Mammary epithelial cell (primary cell): ENCODE measurements at regions of chr1 and their contacts with region 1.

Region 1: DNA sequence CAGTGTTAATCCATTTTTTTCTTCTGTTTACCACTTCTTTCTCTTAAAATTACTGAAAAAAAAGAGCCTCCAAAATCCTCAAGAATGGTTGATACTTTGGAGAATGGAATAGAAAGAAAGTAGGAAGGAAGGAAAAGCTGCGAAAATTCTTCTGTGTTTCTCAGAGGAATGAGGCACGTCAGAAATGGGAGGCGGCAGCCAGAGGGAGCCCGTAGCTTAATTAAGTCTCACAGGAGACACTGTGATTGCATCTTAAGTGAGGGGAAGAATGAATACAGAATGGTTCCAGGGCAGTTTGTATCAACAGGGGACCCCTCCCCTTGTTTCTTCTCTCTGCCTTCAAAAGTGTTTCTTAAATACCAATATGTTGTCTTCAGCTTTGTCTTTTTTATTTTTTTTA is 1099.5 kb downstream of the PLA2G4A start:
- DNase-seq: peak; percentile 20
- H3K4me3 ChIP-seq: no peak overlapping the region
- H3K27ac ChIP-seq: no peak overlapping the region
- H3K4me1 ChIP-seq: no peaks in the 10 kb centered on the region
- H3K27me3 ChIP-seq: no peaks in the 10 kb centered on the region
- CTCF ChIP-seq: peak; percentile 50 to 70

Region 2: GRCh38 chr1:187051618-187052232 is 876.6 kb before region 1 on chr1:
- CTCF ChIA-PET with region 1: no interaction called
- dilution Hi-C with region 1: no loop called
- in situ Hi-C with region 1: no loop called
- intact Hi-C with region 1: loop called (anchors 10 kb)
- DNase-seq: peak; percentile 31
- H3K4me3 ChIP-seq: no peak overlapping the region
- H3K27ac ChIP-seq: no peak overlapping the region
- H3K4me1 ChIP-seq: no peaks in the 10 kb centered on the region
- H3K27me3 ChIP-seq: peaks cover 3% of the 10 kb centered on the region
- CTCF ChIP-seq: peak; percentile 22 to 55

Region 3: DNA sequence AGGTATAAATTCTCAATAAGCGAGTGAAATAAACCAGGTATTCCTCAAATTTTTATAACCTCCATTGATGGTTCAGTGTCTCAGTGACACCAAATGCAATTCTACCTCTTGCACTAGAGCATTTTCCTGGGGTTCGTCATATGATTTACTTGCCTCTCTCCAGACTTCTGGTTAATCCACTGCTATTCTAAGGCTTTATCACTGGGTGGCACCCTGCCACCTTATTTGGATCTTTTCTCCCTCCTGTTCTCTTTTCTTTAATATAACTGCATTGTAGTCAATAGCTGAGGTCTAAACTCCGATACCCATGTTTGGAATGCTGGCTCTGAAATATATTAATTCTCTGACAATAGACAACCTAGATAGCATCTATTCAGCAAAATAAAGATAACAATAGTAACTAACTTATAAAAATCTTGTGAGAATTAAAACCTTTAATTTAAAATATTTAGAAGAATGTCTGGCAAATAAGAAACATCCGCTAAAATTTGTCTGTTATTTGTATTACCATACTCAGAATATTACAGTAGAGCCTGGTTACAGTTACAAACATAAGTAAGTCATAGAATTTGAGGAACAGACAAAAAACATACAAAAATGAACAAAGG is 663.2 kb before region 1 on chr1:
- CTCF ChIA-PET with region 1: no interaction called
- dilution Hi-C with region 1: no loop called
- in situ Hi-C with region 1: no loop called
- intact Hi-C with region 1: loop called (anchors 2 kb)
- DNase-seq: peak; percentile 46
- H3K4me3 ChIP-seq: no peak overlapping the region
- H3K27ac ChIP-seq: no peak overlapping the region
- H3K4me1 ChIP-seq: peaks cover 6% of the 10 kb centered on the region
- H3K27me3 ChIP-seq: peaks cover 4% of the 10 kb centered on the region
- CTCF ChIP-seq: peak; percentile 66

Region 4: DNA sequence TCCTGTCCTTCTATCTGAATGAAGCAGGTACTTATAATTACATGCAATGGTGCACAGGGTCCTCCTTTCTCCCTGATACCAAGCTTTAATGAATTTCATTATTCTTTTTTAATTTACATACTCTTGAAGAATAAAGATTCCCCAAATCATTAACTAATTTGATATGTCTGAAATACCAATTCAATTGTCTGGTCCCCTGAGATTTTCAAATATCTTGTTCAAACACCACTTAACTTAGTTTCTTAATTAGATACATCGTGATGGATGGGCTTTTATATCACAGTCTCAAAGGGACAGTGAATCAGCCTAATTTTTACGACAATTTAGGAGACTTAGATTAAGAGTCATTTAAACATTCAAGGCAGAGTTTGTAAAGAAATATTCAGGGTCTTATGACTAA is 44.9 kb before region 1 on chr1:
- CTCF ChIA-PET with region 1: no interaction called
- dilution Hi-C with region 1: no loop called
- in situ Hi-C with region 1: no loop called
- intact Hi-C with region 1: no loop called
- DNase-seq: no peak
- H3K4me3 ChIP-seq: no peak overlapping the region
- H3K27ac ChIP-seq: no peak overlapping the region
- H3K4me1 ChIP-seq: no peaks in the 10 kb centered on the region
- H3K27me3 ChIP-seq: peaks cover 3% of the 10 kb centered on the region
- CTCF ChIP-seq: no peak

Region 5: GRCh38 chr1:187909382-187909781 is 18.9 kb before region 1 on chr1:
- CTCF ChIA-PET with region 1: no interaction called
- dilution Hi-C with region 1: no loop called
- in situ Hi-C with region 1: no loop called
- intact Hi-C with region 1: no loop called
- DNase-seq: no peak
- H3K4me3 ChIP-seq: no peak overlapping the region
- H3K27ac ChIP-seq: no peak overlapping the region
- H3K4me1 ChIP-seq: no peaks in the 10 kb centered on the region
- H3K27me3 ChIP-seq: no peaks in the 10 kb centered on the region
- CTCF ChIP-seq: no peak

Region 6: GRCh38 chr1:187977298-187977697 is 49.0 kb after region 1 on chr1:
- CTCF ChIA-PET with region 1: no interaction called
- dilution Hi-C with region 1: no loop called
- in situ Hi-C with region 1: no loop called
- intact Hi-C with region 1: no loop called
- DNase-seq: no peak
- H3K4me3 ChIP-seq: no peak overlapping the region
- H3K27ac ChIP-seq: no peak overlapping the region
- H3K4me1 ChIP-seq: no peaks in the 10 kb centered on the region
- H3K27me3 ChIP-seq: peaks cover 2% of the 10 kb centered on the region
- CTCF ChIP-seq: no peak

Region 7: DNA sequence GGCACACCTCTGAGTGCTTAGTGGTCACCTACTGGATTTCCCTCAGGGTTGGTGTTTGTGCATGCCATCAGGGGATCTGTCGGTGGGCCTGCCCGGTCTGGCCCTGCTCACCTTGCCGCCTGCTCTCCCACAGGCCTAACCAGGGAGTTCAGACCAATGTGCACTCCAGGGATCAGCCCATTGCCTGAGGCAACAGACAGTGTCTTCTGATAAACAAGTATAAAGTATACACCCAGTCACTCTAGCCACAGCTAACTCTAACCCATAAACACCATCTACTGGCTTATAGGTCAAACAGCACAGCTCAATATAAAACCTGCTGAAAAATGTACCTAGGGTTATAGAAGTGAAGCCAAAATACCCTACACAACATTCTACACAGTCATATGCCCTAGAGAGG is 200.5 kb after region 1 on chr1:
- CTCF ChIA-PET with region 1: interaction called, 4 read pairs
- dilution Hi-C with region 1: no loop called
- in situ Hi-C with region 1: loop called in 1 of 2 experiments (anchors 10 kb)
- intact Hi-C with region 1: loop called (anchors 1 kb)
- DNase-seq: peak; percentile 35
- H3K4me3 ChIP-seq: no peak overlapping the region
- H3K27ac ChIP-seq: no peak overlapping the region
- H3K4me1 ChIP-seq: no peaks in the 10 kb centered on the region
- H3K27me3 ChIP-seq: no peaks in the 10 kb centered on the region
- CTCF ChIP-seq: peak in 1 of 2 donors; percentile 54

Region 8: GRCh38 chr1:188240772-188241406 is 312.6 kb after region 1 on chr1:
- CTCF ChIA-PET with region 1: no interaction called
- dilution Hi-C with region 1: no loop called
- in situ Hi-C with region 1: no loop called
- intact Hi-C with region 1: loop called (anchors 1 kb)
- DNase-seq: no peak
- H3K4me3 ChIP-seq: no peak overlapping the region
- H3K27ac ChIP-seq: no peak overlapping the region
- H3K4me1 ChIP-seq: peaks cover 3% of the 10 kb centered on the region
- H3K27me3 ChIP-seq: no peaks in the 10 kb centered on the region
- CTCF ChIP-seq: no peak

Region 9: DNA sequence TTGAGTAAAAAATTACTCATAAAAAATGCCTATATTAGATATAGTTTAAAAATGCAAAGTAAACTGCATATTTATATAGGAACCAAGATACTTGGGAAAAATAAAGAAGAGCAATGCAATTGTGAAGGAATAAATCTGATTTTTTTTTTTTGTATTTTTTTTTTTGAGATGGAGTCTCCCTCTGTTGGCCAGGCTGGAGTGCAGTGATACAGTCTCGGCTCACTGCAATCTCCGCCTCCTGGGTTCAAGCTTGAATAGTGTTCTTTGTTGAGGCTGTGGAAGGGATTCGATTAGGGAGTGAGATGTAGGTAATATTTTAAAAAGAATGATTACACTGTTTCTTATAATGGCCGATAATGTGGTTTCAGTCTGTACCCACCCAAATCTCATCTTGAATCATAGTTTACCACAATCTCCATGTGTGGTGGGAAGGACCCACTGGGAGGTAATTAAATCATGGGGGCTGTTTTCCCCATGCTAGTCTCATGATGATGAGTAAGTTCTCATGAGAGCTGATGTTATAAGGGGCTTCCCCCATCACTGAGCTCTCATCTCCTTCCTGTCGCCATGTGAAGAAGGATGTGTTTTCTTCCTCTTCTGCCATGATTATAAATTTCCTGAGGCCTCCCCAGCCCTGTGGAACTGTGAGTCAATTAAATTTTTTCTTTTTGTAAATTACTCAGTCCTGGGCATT is 666.4 kb after region 1 on chr1:
- CTCF ChIA-PET with region 1: no interaction called
- dilution Hi-C with region 1: no loop called
- in situ Hi-C with region 1: no loop called
- intact Hi-C with region 1: loop called (anchors 5 kb)
- DNase-seq: no peak
- H3K4me3 ChIP-seq: no peak overlapping the region
- H3K27ac ChIP-seq: no peak overlapping the region
- H3K4me1 ChIP-seq: no peaks in the 10 kb centered on the region
- H3K27me3 ChIP-seq: no peaks in the 10 kb centered on the region
- CTCF ChIP-seq: peak in 1 of 2 donors; percentile 41